ENCODE measurements at regions of chr12 and their contacts with region 1.

Region 1: GRCh38 chr12:123559468-123559867 is 24.9 kb upstream of the TMED2 start:
- DNase-seq: no peak
- ATAC-seq: no peak
- H3K4me3 Mint-ChIP-seq: no peak overlapping the region
- H3K27ac Mint-ChIP-seq: no peak overlapping the region
- H3K4me1 Mint-ChIP-seq: no peaks in the 10 kb centered on the region
- H3K27me3 Mint-ChIP-seq: no peaks in the 10 kb centered on the region
- CTCF ChIP-seq: no peak

Region 2: GRCh38 chr12:123479442-123480180 is 79.9 kb before region 1 on chr12:
- CTCF ChIA-PET with region 1: no interaction called
- POLR2A ChIA-PET with region 1: no interaction called
- intact Hi-C with region 1: loop called (anchors 10 kb)
- DNase-seq: no peak
- ATAC-seq: no peak
- H3K4me3 Mint-ChIP-seq: no peak overlapping the region
- H3K27ac Mint-ChIP-seq: no peak overlapping the region
- H3K4me1 Mint-ChIP-seq: peaks cover 11% of the 10 kb centered on the region
- H3K27me3 Mint-ChIP-seq: no peaks in the 10 kb centered on the region
- CTCF ChIP-seq: no peak

Region 3: GRCh38 chr12:123546281-123546680 is 13.2 kb before region 1 on chr12:
- CTCF ChIA-PET with region 1: no interaction called
- POLR2A ChIA-PET with region 1: no interaction called
- intact Hi-C with region 1: no loop called
- DNase-seq: no peak
- ATAC-seq: no peak
- H3K4me3 Mint-ChIP-seq: no peak overlapping the region
- H3K27ac Mint-ChIP-seq: no peak overlapping the region
- H3K4me1 Mint-ChIP-seq: no peaks in the 10 kb centered on the region
- H3K27me3 Mint-ChIP-seq: peaks cover 17% of the 10 kb centered on the region
- CTCF ChIP-seq: no peak

Measured in activated B cell treated with CpG ODN at 0.5 μM for 24 hours (primary cell).